GM10248 (cell line): ENCODE measurements at regions of chr15 and their contacts with region 1.

Region 1: GRCh38 chr15:73633111-73633990 is at the start of gene NPTN:
- DNase-seq: peak; percentile 96
- CTCF ChIP-seq: no peak

Region 2: GRCh38 chr15:73504885-73505284 is 128.5 kb before region 1 on chr15:
- CTCF ChIA-PET with region 1: no interaction called
- POLR2A ChIA-PET with region 1: no interaction called
- DNase-seq: no peak
- CTCF ChIP-seq: no peak

Region 3: GRCh38 chr15:73560501-73561117 is 72.7 kb before region 1 on chr15:
- CTCF ChIA-PET with region 1: interaction called, 118 read pairs
- POLR2A ChIA-PET with region 1: interaction called, 3 read pairs
- DNase-seq: no peak
- CTCF ChIP-seq: peak; percentile 29

Region 4: DNA sequence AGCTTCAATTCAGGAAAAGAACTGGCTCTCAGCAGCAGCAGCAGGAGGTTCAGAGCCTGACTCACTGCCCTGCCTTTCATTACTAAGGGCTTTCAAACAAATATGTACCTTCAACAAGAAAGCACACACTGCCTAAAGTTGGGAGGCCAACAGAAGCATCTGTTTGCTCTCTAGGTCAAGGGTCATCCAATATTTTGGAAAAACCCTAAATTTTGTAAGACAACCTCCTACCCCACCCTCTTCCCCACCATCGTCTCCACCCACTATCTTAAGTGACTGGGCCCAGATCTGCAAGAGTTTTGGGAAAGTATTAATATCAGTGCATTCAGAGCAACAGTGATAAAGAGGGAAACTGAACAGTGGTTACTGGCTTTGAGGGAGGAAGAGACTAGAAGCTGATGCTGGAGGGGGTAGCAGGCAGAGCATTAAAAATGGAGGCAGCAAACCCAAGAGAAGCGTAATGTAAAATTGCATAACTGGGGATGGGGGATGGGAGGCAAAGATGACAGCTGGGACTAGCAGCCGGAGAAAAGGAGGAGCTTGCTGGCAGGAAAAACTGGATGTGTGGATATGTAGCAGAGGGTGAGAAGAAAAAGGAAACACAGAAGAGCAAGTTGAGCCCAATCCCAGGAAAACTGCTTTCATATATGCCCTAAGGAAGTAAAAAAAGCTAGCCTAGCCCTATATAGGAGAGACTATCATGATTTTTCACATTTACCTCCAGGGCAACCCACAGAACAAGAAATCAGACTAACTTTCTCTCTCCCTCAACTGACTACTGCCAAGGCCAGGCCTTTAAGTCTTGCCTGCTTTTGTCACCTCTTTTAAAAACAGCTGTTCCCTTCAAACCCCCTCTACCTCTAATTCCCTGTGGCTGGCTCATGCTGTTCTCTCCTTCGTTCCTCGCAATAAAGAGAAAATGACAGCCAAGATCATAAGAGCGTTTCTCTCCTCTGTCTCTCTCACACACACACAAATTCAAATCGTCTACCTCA is 31.6 kb before region 1 on chr15:
- CTCF ChIA-PET with region 1: interaction called, 131 read pairs
- POLR2A ChIA-PET with region 1: no interaction called
- DNase-seq: no peak
- CTCF ChIP-seq: no peak

Region 5: GRCh38 chr15:73660455-73660854 is 27.1 kb after region 1 on chr15:
- CTCF ChIA-PET with region 1: interaction called, 11 read pairs
- POLR2A ChIA-PET with region 1: no interaction called
- DNase-seq: no peak
- CTCF ChIP-seq: no peak

Region 6: GRCh38 chr15:73697033-73697467 is 63.7 kb after region 1 on chr15:
- CTCF ChIA-PET with region 1: interaction called, 105 read pairs
- POLR2A ChIA-PET with region 1: no interaction called
- DNase-seq: peak; percentile 78
- CTCF ChIP-seq: no peak

Region 7: DNA sequence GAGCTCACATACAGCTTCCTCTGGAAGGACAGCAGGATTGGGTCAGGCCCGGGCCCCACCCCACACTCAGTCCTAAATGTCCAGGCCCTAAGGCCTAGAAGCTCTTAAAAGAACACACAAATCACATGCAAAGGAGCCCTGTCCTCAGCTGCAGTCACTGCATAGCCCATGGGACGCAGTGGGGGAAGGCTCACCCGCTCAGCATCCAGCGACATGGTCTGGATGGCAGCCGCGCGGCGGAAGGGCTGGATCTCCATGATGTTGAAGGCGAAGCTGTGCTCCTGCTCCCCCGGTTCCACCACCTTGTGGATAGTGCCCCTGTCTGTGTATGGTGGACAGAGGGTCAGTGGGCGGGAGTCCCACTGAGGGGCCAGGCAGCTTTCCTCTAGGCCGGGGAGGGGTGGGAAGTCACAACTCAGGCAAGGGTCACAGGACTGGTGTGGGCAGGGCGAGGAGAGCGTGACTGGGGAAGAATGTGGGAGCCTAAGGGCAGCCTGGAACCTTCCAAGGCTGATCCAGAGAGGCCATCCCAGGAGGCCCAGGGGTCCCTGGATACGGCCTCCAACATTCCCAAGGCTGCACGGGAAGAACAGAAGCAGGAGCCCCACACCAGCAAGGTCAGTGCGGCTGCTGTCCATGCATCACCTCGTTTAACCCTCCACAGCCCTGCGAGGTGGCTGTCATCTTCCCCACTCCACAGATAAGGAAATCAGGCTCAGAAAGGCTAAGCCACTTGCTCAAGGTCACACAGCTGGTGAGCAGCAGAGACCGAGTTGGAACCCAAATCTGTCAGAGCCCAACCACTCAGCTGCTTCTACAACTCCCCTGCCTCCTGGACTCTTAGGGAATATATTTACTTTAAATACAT is 778.6 kb after region 1 on chr15:
- CTCF ChIA-PET with region 1: no interaction called
- POLR2A ChIA-PET with region 1: no interaction called
- DNase-seq: no peak
- CTCF ChIP-seq: no peak